Heart left ventricle (tissue), 16 donors: ENCODE measurements at regions of chr19 and their contacts with region 1.

Region 1: DNA sequence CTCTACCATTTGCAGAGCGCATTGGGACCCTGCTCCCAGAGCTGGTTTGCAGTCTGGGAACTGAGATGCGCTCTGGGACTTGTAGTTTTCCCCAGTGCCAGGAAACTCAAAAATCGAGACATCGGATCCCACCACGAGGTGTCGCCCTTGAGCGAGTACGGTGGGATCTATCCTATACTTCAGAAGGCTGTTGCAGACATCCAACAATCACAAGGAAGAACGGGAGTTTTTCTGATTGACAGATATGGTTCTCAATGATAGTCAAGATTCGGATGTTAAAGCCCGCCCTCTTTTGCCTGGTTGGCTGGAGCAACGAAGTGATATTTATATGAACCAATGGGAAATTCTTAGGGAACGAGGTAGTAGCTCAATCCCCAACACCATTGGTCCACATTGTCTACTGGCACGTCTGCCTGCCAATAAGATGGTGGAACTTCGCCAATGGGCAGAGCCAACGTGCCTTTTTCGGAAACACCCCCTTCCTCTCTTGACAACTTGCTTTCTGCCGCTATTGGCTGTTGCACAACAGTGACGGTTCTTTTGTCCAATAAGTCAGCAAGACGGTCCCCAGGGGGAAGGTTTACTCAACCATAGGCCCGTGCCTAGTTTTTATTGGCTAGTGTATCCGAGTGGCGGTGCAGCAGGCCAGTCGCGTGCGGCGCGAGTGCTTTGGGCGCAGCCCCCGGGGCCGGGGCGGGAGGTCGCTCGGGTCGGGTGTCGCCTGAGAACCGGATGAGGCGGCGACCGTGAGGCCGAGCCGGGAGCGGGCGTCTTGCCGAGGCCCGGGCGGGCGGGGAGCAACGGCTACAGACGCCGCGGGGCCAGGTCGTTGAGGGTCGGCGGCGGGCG is at the start of gene DNM2:
- DNase-seq: peak; percentile 99
- ATAC-seq: peak; percentile 91 to 95 (median 94)
- H3K4me3 ChIP-seq: peak within 1 kb of the TSS; percentile 91 to 100 (median 98)
- H3K27ac ChIP-seq: peak within 1 kb of the TSS; percentile 78 to 100 (median 98)
- H3K4me1 ChIP-seq: peaks cover 8 to 45% (median 27%) of the 10 kb centered on the region in 12 donors
- H3K27me3 ChIP-seq: no peaks in the 10 kb centered on the region
- CTCF ChIP-seq: peak; percentile 77 to 96 (median 86)
- POLR2A ChIP-seq: peak; percentile 66 to 89
- total RNA-seq, gene DNM2: 98.9 to 204 (median 137) TPM

Region 2: GRCh38 chr19:10751109-10751953 is 33.8 kb after region 1 on chr19:
- intact Hi-C with region 1: loop called in 1 of 10 experiments (anchors 5 kb)
- DNase-seq: peak in 3 of 5 donors; percentile 52 to 53 (median 52)
- ATAC-seq: peak; percentile 49 to 70 (median 58)
- H3K4me3 ChIP-seq: no peak overlapping the region
- H3K27ac ChIP-seq: peak overlapping the region; percentile 73 to 94 (median 87)
- H3K4me1 ChIP-seq: peaks cover 24 to 88% (median 59%) of the 10 kb centered on the region in 12 donors
- H3K27me3 ChIP-seq: no peaks in the 10 kb centered on the region
- CTCF ChIP-seq: no peak
- POLR2A ChIP-seq: no peak

Region 3: DNA sequence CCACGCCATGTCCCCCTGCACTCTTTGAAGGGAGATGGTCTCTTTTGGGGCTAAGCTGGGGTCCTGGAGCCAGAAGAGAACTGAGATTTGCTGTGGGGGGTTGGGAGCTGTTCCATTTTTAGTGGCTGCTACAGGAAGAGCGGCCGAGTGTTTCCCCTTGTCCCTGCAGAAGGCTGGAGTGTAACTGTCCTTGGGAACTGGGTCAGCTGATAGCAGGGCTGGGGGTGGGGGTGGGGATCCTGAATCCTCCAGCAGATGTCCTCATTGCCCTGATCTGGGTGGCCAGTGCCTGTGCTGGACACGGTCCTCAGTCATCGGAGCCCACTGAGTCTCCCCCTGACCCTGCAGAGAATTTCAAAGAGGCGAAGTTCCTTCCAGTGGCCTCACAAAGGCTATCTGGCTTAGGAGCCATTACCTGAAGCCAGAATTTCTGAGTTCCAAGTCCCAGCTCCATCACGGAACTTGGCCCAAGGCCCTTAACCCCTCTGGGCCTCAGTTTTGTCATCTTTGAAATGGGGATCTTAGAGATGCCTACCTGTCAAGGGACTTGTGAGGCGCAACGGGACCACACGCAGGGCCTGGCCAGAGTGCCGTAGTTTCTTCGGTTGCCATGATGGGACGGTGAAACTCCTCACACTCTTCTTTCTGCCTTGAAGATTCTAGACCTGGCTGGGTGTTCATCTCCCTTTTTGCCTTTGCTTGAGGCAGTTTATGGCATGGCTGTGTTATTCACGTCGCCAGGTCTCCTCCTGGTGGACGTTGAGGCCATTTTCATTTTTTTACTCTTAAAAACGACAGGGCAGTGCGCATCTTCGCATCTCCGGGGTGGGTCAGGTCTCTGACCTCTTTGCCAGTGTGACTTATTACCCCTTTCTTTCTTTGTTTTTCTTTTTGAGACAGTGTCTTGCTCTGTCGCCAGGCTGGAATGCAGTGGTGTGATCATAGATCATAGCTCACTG is 52.2 kb after region 1 on chr19:
- intact Hi-C with region 1: loop called (anchors 1 to 5 kb)
- DNase-seq: peak; percentile 73 to 88 (median 83)
- ATAC-seq: peak; percentile 80 to 86 (median 82)
- H3K4me3 ChIP-seq: peak overlapping the region in 3 of 12 donors; percentile 0 to 18 (median 10)
- H3K27ac ChIP-seq: peak overlapping the region; percentile 70 to 97 (median 88)
- H3K4me1 ChIP-seq: peaks cover 21 to 60% (median 55%) of the 10 kb centered on the region in 12 donors
- H3K27me3 ChIP-seq: no peaks in the 10 kb centered on the region
- CTCF ChIP-seq: peak in 11 of 12 donors; percentile 16 to 61 (median 43)
- POLR2A ChIP-seq: no peak

Region 4: GRCh38 chr19:10835754-10836477 is 118.3 kb after region 1 on chr19 and contains the start of gene TMED1:
- intact Hi-C with region 1: loop called in 1 of 10 experiments (anchors 1 kb)
- DNase-seq: peak; percentile 98 to 100 (median 99)
- ATAC-seq: peak; percentile 92 to 95 (median 94)
- H3K4me3 ChIP-seq: peak within 1 kb of the TSS; percentile 37 to 96 (median 74)
- H3K27ac ChIP-seq: peak within 1 kb of the TSS; percentile 94 to 100 (median 98)
- H3K4me1 ChIP-seq: peaks cover 0 to 16% (median 9%) of the 10 kb centered on the region in 12 donors
- H3K27me3 ChIP-seq: no peaks in the 10 kb centered on the region
- CTCF ChIP-seq: peak in 11 of 12 donors; percentile 12 to 58 (median 31)
- POLR2A ChIP-seq: peak in 1 of 2 donors; percentile 50
- total RNA-seq, gene TMED1: 27.0 to 56.5 (median 35.0) TPM

Region 5: DNA sequence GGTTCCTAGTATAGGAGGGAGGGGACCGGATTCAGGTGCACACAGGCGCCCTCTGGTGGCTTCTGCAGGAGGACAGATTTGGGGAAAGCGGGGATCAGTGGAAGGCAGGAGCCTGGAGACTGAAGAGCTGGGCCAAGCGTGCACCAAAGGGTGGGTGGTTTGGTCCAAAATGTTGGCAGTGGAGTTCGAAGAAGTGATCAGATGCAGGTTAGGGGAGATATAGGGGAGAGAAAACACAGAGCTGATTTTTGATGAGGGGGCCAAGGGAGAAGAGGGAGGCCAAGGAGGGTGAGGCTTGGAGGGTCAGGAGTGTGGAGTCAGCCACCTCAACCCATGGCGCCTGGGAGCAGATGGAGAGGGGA is 146.9 kb after region 1 on chr19:
- intact Hi-C with region 1: loop called (anchors 1 to 10 kb)
- DNase-seq: peak; percentile 82 to 92 (median 84)
- ATAC-seq: peak; percentile 69 to 84 (median 82)
- H3K4me3 ChIP-seq: peak overlapping the region in 3 of 12 donors; percentile 13 to 25 (median 21)
- H3K27ac ChIP-seq: peak overlapping the region in 1 of 12 donors; percentile 23
- H3K4me1 ChIP-seq: peaks cover 0 to 37% (median 1%) of the 10 kb centered on the region in 12 donors
- H3K27me3 ChIP-seq: no peaks in the 10 kb centered on the region
- CTCF ChIP-seq: peak; percentile 77 to 95 (median 89)
- POLR2A ChIP-seq: no peak

Region 6: DNA sequence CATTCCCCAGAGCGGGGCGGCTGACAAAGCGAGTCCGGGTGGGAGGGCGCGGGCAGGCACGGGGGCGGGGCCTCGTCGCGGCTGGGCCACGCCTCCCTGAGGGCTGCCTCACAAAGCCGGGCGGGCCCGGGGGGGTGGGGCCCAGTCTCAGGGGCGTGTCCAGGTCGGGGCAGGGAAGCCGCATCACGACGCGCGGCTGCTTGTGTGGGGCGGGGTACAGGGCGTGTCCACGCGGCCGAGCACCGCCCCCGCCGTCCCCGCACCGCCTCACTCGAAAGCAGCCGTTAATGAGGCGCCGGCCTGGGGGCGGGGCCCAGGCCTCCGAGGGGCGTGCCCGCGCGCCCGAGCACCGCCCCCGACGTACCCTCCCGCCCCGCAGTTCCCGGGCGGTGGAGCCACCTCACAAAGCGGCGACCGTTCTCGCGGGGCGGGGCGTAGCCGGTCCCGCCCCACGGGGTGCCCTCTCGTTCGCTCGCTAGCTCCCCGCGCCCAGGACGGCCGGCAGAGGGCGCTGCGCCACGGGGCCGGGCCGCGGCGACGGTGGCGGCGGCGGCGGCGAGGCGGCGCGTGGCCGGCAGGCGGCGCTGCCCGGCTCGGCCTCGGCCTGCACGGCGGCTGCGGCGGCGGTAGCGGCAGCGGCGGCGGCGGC is 153.5 kb after region 1 on chr19 and contains the start of gene CARM1:
- intact Hi-C with region 1: loop called in 5 of 10 experiments (anchors 1 to 10 kb)
- DNase-seq: peak; percentile 99 to 100 (median 99)
- ATAC-seq: peak; percentile 95 to 97 (median 96)
- H3K4me3 ChIP-seq: peak within 1 kb of the TSS; percentile 53 to 96 (median 76)
- H3K27ac ChIP-seq: peak within 1 kb of the TSS in 11 of 12 donors; percentile 70 to 87 (median 81)
- H3K4me1 ChIP-seq: peaks cover 0 to 52% (median 18%) of the 10 kb centered on the region in 12 donors
- H3K27me3 ChIP-seq: no peaks in the 10 kb centered on the region
- CTCF ChIP-seq: peak; percentile 35 to 86 (median 65)
- POLR2A ChIP-seq: peak in 1 of 2 donors; percentile 39
- total RNA-seq, gene CARM1: 22.4 to 39.5 (median 29.3) TPM